ENCODE measurements at regions of chr14 and their contacts with region 1.

Region 1: GRCh38 chr14:69666690-69667239 is 55.4 kb downstream of the SUSD6 start:
- DNase-seq: no peak

Region 2: DNA sequence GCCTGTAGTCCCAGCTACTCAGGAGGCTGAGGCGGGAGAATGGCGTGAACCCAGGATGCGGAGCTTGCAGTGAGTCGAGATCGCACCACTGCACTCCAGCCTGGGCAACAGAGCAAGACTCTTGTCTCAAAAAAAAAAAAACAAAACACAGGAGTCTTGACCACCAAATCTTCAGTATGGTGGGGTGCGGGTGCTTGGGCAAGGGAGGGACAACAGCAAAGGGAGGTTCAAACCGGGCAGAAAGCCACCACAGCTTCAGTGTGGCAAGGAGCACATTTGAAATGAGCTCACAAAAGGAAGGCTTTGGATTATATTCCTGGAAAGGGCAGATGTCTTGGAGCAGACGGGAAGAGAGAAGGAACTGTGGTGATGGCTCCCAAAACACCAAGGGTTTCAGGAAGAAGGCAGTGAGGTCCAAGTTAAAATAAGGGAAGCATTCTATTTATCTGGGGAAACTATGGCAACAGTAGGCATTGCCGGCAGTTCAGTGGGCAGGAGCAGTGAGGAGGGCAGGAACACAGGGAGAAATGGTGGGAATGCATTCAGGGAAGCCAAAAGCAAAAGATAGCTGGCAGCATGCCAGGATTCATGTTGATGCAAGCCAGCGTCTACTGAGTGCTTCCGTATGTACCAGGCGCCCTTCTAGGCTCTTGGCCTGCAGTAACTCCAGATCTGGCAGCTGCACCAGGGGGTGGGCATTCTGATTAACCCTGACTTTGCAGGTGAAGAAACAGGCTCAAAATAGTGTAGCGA is 49.1 kb after region 1 on chr14:
- intact Hi-C with region 1: loop called in 1 of 2 experiments (anchors 10 kb)
- DNase-seq: peak; percentile 52

Region 3: DNA sequence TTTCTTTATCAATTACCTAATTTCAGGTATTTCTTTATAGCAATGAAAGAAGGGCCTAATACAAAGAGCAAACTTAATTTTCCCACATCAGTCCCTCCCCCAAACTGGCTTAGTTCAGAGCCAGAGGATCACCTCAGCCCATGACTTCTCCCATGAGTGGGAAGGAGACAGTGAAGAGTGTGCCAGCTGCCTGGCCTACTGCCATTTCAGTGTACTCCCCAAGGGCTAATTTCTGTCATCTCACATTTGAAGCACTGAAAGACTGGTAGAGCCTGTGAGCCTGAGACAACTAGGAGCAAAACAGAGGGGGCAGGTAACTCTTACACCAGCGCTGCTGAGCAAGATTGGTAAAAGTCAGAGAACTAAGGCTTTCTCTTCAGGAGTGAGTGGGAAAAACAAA is 897.1 kb after region 1 on chr14:
- intact Hi-C with region 1: loop called in 1 of 2 experiments (anchors 5 kb)
- DNase-seq: no peak